ENCODE measurements at regions of chr4 and their contacts with region 1.

Region 1: GRCh38 chr4:92303621-92304027 is at the start of gene GRID2:
- DNase-seq: no peak
- H3K4me3 Mint-ChIP-seq: no peak within 1 kb of the TSS
- H3K27ac Mint-ChIP-seq: no peak within 1 kb of the TSS
- H3K4me1 Mint-ChIP-seq: peaks cover 4% of the 10 kb centered on the region
- H3K27me3 Mint-ChIP-seq: peaks cover 21% of the 10 kb centered on the region
- total RNA-seq, gene GRID2: not detected

Region 2: DNA sequence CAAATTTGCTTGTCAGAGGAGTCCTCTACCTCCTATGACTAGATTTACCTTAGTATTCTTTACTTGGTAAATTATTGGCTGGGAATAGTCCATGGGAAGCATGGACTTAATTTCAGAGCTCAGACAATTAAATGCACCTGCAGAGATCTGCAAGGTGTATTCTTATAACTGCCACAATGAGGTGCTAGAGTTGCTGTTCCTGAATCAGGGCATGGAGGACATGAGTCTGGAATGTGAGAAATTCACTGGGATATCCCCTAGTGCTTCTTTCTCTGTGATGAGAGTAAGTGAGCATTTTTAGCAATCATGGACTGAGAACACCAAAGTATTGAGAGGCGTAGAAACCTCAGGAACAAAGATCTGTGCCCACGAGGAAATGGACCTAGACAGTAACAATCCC is 32.7 kb before region 1 on chr4:
- CTCF ChIA-PET with region 1: no interaction called
- POLR2A ChIA-PET with region 1: no interaction called
- intact Hi-C with region 1: no loop called
- DNase-seq: no peak
- H3K4me3 Mint-ChIP-seq: no peak overlapping the region
- H3K27ac Mint-ChIP-seq: no peak overlapping the region
- H3K4me1 Mint-ChIP-seq: no peaks in the 10 kb centered on the region
- H3K27me3 Mint-ChIP-seq: no peaks in the 10 kb centered on the region

Region 3: GRCh38 chr4:93834249-93835066 is 1530.8 kb after region 1 on chr4:
- CTCF ChIA-PET with region 1: no interaction called
- POLR2A ChIA-PET with region 1: no interaction called
- intact Hi-C with region 1: loop called (anchors 5 kb)
- DNase-seq: no peak
- H3K4me3 Mint-ChIP-seq: no peak overlapping the region
- H3K27ac Mint-ChIP-seq: no peak overlapping the region
- H3K4me1 Mint-ChIP-seq: peaks cover 9% of the 10 kb centered on the region
- H3K27me3 Mint-ChIP-seq: peaks cover 60% of the 10 kb centered on the region